ENCODE measurements at regions of chr17 and their contacts with region 1.

Region 1: GRCh38 chr17:47889734-47890529 is 6.1 kb upstream of the SP2 start:
- DNase-seq: peak; percentile 92
- H3K4me3 Mint-ChIP-seq: no peak overlapping the region
- H3K27ac Mint-ChIP-seq: no peak overlapping the region
- H3K4me1 Mint-ChIP-seq: peaks cover 22% of the 10 kb centered on the region
- H3K27me3 Mint-ChIP-seq: no peaks in the 10 kb centered on the region

Region 2: DNA sequence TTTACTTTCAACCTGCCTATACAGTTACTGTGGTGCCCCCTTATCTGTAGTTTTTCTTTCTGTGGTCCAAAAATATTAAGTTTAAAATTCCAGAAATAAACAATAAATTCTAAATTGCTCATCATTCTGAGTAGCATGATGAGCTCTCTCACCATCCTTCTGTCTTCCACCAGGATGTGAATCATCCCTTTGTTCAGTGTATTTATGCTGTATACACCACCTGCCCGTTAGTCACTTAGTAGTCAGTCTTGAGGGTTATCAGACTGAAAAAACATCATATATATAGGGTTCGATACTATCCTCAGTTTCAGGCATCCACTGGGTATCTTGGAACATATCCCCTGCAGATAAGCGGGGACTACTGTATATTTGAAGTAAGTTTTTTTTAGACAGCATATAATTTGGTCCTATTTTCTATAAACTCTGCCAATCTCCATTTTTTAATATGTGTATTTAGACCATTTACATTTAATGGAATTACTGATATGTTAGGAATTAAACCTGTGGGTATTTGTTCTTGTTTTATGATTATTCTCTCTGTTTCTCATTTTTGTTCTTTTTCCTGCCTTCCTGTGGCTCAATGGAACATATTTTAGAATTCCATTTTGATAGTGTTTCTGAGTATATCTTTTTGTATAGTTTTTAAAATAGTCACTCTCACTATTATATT is 125.9 kb before region 1 on chr17:
- CTCF ChIA-PET with region 1: no interaction called
- POLR2A ChIA-PET with region 1: no interaction called
- DNase-seq: no peak
- H3K4me3 Mint-ChIP-seq: no peak overlapping the region
- H3K27ac Mint-ChIP-seq: no peak overlapping the region
- H3K4me1 Mint-ChIP-seq: peaks cover 16% of the 10 kb centered on the region
- H3K27me3 Mint-ChIP-seq: peaks cover 17% of the 10 kb centered on the region

Region 3: DNA sequence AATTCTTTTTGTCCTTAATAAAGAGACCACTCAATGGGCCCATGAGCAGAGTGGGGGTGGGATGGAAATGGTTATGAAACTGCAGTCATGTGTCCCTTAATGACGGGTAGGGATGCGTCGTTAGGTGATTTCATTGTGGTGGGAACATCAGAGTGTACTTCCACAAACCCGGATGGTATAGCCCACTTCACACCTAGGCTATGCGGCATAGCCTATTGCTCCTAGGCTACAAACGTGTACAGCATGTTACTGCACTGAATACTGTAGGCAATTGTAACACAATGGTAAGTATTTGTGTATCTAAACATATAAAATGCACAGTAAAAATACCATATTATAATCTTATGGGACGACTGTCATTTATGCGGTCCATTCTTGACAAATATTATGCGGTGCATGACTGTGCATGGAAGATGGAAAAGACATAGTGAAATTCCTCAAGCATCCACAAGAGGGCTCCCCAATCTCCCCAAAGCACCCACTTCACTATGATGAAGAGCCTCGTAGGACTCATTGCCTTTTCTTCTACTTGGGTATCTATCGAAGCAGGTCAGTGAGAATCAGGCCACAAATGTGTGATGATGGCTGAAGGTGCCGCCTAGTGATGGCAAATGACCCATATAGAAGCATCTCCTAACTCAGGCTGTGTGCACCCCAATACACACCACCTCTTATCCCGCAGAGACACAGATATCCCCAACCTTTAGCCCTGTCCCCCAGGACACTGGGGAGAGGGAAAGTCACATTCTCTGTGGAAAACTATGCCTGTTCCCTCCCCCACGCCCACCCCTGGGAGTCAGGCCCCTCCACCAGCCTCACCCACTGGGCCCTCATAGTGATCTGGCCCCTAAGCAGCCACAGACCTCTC is 113.4 kb before region 1 on chr17:
- CTCF ChIA-PET with region 1: no interaction called
- POLR2A ChIA-PET with region 1: no interaction called
- DNase-seq: peak; percentile 34
- H3K4me3 Mint-ChIP-seq: no peak overlapping the region
- H3K27ac Mint-ChIP-seq: no peak overlapping the region
- H3K4me1 Mint-ChIP-seq: no peaks in the 10 kb centered on the region
- H3K27me3 Mint-ChIP-seq: peaks cover 50% of the 10 kb centered on the region

Region 4: GRCh38 chr17:47840740-47841603 is 49.0 kb before region 1 on chr17 and contains the start of gene SCRN2:
- CTCF ChIA-PET with region 1: interaction called, 411 read pairs
- POLR2A ChIA-PET with region 1: interaction called, 53 read pairs
- DNase-seq: peak; percentile 90
- H3K4me3 Mint-ChIP-seq: peak within 1 kb of the TSS; percentile 93
- H3K27ac Mint-ChIP-seq: peak within 1 kb of the TSS; percentile 66
- H3K4me1 Mint-ChIP-seq: peaks cover 36% of the 10 kb centered on the region
- H3K27me3 Mint-ChIP-seq: peaks cover 20% of the 10 kb centered on the region
- total RNA-seq, gene SCRN2: 29.1 to 29.8 TPM

Region 5: DNA sequence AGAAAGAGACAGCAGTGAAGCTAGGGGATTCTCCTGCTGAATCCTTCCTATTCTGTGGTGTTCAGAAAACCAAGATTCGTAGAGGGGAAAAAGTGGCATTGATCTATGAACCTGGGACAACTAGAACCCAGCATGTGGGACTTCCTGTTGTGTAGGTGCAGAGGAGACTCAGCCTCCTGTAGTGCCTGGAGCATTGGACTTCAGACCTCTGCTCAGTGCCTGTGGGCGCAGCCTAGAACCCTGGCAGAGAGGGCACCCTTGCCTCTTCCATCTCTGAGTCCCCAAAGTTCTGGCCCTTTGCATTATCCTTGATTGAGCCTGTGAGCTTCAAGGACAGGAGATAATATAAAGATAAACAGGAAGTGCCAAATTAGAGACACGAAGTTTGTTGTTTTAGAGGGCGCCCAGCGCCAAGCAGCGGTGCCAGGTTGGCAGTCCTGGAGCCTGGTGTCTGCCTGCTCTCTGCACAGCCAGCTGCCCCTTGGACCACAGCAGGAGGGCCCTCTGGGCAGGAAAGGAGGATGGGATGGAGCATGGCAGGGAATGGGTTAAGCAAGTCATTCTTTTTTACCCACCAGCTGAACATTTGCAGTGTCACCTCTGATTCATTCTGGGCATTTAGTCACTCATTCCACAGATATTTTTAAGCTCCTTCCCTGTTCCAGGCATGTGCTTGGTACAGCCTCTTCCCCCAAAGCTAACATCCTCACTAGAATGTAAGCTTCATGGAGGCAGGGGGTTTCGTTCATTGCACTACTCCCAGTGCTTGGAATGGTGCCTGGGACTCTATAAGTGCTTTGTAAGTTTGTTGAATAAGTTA is 27.1 kb before region 1 on chr17:
- CTCF ChIA-PET with region 1: interaction called, 18 read pairs
- POLR2A ChIA-PET with region 1: interaction called, 5 read pairs
- DNase-seq: no peak
- H3K4me3 Mint-ChIP-seq: no peak overlapping the region
- H3K27ac Mint-ChIP-seq: no peak overlapping the region
- H3K4me1 Mint-ChIP-seq: peaks cover 14% of the 10 kb centered on the region
- H3K27me3 Mint-ChIP-seq: peaks cover 22% of the 10 kb centered on the region

Region 6: DNA sequence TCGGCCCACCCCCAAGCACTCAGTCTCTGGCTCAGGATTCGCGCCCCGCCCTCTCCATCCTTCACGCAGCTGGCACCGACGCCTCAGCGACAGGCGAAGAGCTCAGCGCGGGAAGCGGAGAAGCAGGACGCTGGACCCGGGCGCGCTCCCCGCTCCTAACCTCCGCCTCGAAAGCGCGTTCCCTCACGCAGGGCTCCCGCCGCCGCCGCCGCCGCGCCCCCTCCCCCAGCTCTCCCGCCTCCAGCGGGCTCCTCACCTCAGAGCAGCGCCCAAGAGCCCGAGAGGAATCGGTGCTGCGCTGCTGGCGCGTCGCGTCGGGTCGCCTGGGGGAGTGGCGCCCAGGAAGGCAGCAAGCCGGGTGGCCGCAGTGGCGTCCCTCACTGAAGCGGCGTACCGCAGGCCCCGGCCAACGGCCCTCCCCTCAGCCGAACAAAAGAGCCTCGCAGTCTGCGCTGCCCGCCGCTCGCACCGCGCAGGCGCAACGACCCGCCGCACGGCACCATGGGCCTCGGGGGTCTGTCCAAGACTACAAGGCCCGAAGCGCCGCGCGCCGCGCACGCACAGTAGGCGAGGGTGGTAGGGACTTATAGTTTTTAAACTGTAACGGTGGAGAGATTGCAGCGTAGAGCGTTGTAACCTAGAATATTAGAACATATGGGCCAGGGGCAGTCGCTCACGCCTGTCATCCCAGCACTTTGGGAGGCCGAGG is 211.2 kb after region 1 on chr17 and contains the start of gene CBX1:
- CTCF ChIA-PET with region 1: no interaction called
- POLR2A ChIA-PET with region 1: no interaction called
- DNase-seq: peak; percentile 95
- H3K4me3 Mint-ChIP-seq: peak within 1 kb of the TSS; percentile 94
- H3K27ac Mint-ChIP-seq: peak within 1 kb of the TSS; percentile 85
- H3K4me1 Mint-ChIP-seq: peaks cover 57% of the 10 kb centered on the region
- H3K27me3 Mint-ChIP-seq: no peaks in the 10 kb centered on the region
- total RNA-seq, gene CBX1: 48.3 to 50.8 TPM

Measured in activated CD4-positive, alpha-beta memory T cell treated with anti-CD3 and anti-CD28 coated beads, Interleukin-2, amount 10 ng/mL, durations not matched to agents 7 days and 5 days (primary cell).